ENCODE measurements at regions of chr2 and their contacts with region 1.

Region 1: DNA sequence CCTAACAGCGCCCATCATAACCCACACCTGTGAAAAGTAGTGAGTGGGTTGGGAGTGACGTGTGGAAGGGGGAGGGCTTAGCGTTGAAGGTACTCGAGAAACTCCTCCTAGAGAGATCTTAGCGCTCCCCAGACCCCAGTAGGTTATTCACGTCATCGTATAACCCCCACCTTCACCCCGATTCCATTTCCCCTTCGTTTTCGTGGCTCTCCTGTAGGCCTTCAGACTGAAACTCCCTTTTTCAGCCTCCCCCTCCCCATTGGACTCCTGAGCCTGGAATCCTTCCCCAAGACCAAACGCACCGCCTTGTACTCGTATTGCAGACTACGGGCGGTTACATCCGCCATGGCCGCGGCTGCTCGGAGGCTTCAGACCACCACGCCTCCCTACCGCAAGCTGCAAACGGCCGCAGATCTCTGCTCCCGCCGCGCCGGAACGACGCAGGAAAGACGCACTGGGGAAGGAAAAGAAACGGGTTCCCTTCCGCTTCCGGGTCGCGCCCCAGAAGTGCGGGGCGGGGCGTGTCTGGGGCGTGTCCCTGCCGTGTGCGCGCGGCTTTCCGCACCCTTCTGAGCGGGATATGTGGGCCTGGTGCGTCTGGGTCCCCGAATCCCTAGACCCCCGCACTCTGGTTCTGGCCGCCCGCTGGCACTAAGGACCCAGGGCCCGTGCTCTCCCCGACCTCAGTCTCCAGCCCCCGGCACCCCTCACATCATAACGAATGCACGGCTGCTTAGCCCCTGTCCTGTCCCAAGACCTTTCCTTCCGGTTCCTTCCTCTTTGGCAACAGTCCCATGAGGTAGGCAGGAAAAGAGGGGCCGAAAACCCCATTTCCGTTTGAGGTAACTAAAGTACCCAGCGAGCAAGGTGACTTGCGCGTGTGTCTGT is at the start of gene SNRNP200:
- DNase-seq: peak; percentile 87
- H3K4me3 Mint-ChIP-seq: peak within 1 kb of the TSS; percentile 99
- H3K27ac Mint-ChIP-seq: peak within 1 kb of the TSS; percentile 96
- H3K4me1 Mint-ChIP-seq: peaks cover 45% of the 10 kb centered on the region
- H3K27me3 Mint-ChIP-seq: no peaks in the 10 kb centered on the region
- total RNA-seq, gene SNRNP200: 192 and 196 TPM in 2 replicates

Region 2: GRCh38 chr2:96208143-96209010 is 97.0 kb before region 1 on chr2 and contains the start of gene STARD7:
- intact Hi-C with region 1: loop called (anchors 1 kb)
- DNase-seq: peak; percentile 98
- H3K4me3 Mint-ChIP-seq: peak within 1 kb of the TSS; percentile 96
- H3K27ac Mint-ChIP-seq: peak within 1 kb of the TSS; percentile 94
- H3K4me1 Mint-ChIP-seq: peaks cover 57% of the 10 kb centered on the region
- H3K27me3 Mint-ChIP-seq: no peaks in the 10 kb centered on the region
- total RNA-seq, gene STARD7: 216 and 229 TPM in 2 replicates

Region 3: GRCh38 chr2:96265840-96266679 is 39.3 kb before region 1 on chr2 and contains the starts of genes CIAO1 and TMEM127:
- intact Hi-C with region 1: loop called (anchors 1 kb)
- DNase-seq: peak; percentile 99
- H3K4me3 Mint-ChIP-seq: peak within 1 kb of the TSS; percentile 96
- H3K27ac Mint-ChIP-seq: peak within 1 kb of the TSS; percentile 94
- H3K4me1 Mint-ChIP-seq: peaks cover 33% of the 10 kb centered on the region
- H3K27me3 Mint-ChIP-seq: no peaks in the 10 kb centered on the region
- total RNA-seq, gene CIAO1: 111 and 115 TPM in 2 replicates
- total RNA-seq, gene TMEM127: 29.7 and 30.1 TPM in 2 replicates

Region 4: GRCh38 chr2:96336104-96336775 is 30.9 kb after region 1 on chr2:
- intact Hi-C with region 1: loop called (anchors 1 kb)
- DNase-seq: no peak
- H3K4me3 Mint-ChIP-seq: peak overlapping the region; percentile 95
- H3K27ac Mint-ChIP-seq: peak overlapping the region; percentile 93
- H3K4me1 Mint-ChIP-seq: peaks cover 67% of the 10 kb centered on the region
- H3K27me3 Mint-ChIP-seq: no peaks in the 10 kb centered on the region

Region 5: DNA sequence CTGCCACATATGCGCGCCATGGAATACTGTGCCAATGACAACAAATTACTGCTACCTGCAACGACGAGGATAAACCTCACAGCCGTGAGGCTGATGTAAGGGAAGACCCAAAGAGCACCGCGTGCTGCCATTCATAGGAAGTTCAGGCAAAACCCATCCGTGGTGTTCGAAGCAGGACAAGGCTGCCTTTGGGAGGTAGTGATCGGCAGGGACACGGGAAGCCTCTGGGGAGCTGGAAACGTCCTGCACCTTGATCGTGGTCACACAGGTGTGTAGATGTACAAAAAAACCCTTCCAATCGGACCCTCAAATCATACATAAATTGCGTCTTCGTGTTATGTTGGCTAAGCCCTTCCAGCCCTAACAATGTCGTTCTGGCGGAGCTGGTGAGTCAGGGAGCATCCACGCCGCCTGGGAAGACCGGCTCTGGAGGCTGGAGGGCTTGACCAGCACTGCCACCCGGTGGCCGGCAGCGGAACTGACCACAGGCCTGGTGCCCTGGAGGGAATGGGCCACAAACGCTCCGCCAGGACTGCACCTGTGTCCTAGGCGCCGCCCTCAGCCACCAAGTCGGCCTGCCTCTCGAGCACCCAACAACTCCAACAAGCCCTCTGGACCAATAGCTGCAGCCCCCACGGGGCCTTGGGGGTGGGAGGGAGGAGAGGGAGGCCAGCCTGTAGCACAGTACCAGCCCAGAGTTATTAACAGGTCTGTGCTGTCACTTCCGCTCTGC is 203.9 kb after region 1 on chr2:
- intact Hi-C with region 1: loop called (anchors 1 kb)
- DNase-seq: peak; percentile 46
- H3K4me3 Mint-ChIP-seq: peak overlapping the region; percentile 26
- H3K27ac Mint-ChIP-seq: no peak overlapping the region
- H3K4me1 Mint-ChIP-seq: peaks cover 57% of the 10 kb centered on the region
- H3K27me3 Mint-ChIP-seq: peaks cover 3% of the 10 kb centered on the region

Region 6: GRCh38 chr2:96856776-96857673 is 551.7 kb after region 1 on chr2:
- intact Hi-C with region 1: loop called (anchors 5 kb)
- DNase-seq: no peak
- H3K4me3 Mint-ChIP-seq: peak overlapping the region; percentile 85
- H3K27ac Mint-ChIP-seq: peak overlapping the region; percentile 88
- H3K4me1 Mint-ChIP-seq: peaks cover 26% of the 10 kb centered on the region
- H3K27me3 Mint-ChIP-seq: no peaks in the 10 kb centered on the region

Region 7: DNA sequence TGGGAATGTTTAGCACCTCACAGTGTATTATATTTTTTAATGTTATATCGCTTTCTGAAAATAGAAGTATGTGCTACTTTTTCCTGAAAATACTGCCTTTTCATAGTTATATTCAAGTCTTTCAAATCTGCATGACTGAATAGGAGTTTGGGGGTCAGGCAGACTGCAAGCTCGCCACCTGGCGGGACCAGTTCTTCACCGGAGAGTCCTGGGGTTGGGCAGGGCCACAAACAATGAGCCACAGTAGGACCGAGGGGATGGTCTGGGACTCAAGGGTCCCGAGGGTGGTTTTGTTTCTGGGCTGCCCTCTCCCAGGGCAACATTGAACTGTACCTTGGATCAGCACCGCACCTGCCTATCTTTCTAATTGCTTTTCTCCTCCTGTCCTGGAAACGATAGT is 1852.2 kb after region 1 on chr2:
- intact Hi-C with region 1: no loop called
- DNase-seq: no peak
- H3K4me3 Mint-ChIP-seq: no peak overlapping the region
- H3K27ac Mint-ChIP-seq: no peak overlapping the region
- H3K4me1 Mint-ChIP-seq: no peaks in the 10 kb centered on the region
- H3K27me3 Mint-ChIP-seq: peaks cover 17% of the 10 kb centered on the region